Activated T-helper 1 cell treated with anti-CD3 and anti-CD28 coated beads, Interleukin-12 subunit alpha, Interleukin-12 subunit beta, Interleukin-2, Interleukin-4 antibody, amounts not matched to agents 30 ng/mL and 10 ng/mL and 1 ng/mL, durations not matched to agents 14 hours and 24 hours and 36 hours (primary cell): ENCODE measurements at regions of chr2 and their contacts with region 1.

Region 1: DNA sequence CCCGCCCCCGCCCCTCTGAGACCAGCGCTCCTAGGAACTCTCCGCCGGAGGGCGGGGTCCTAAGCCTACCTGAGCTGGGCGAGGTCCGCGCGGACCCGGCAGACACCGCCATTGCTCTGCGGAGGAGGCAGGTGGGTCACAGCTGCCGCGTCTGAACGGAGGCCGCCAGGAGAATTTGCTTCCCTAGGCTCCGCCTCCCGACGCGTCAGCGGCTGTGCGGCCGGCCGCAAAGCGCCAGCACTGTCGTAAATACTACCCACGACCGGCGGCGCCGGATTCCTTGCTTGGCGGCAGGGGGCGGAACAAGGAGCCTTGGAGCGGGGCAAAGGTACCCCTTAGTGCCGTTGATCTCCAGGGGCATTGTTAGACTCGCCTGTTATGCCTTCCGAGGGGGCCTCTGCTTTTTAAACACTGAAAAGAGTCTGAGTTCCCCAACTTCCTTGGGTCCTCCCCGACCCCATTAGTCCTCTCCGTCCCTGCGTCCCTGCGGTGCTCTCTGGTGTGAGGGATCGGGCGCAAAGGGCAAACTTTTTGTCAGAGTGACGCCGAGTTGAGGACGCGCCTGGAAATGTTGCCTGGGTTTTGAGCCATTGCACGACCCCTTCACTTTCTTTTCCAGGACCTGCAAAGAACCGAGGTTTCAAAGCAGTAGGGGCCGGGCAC is at the start of gene GGCX:
- DNase-seq: peak; percentile 88
- H3K4me3 Mint-ChIP-seq: peak within 1 kb of the TSS; percentile 94
- H3K27ac Mint-ChIP-seq: peak within 1 kb of the TSS; percentile 81
- H3K4me1 Mint-ChIP-seq: peaks cover 36% of the 10 kb centered on the region
- H3K27me3 Mint-ChIP-seq: no peaks in the 10 kb centered on the region
- total RNA-seq, gene GGCX: 26.2 and 28.3 TPM in 2 replicates

Region 2: GRCh38 chr2:85577386-85578242 is 16.2 kb after region 1 on chr2 and contains the start of gene VAMP8:
- intact Hi-C with region 1: loop called (anchors 1 kb)
- DNase-seq: peak; percentile 52
- H3K4me3 Mint-ChIP-seq: peak within 1 kb of the TSS; percentile 91
- H3K27ac Mint-ChIP-seq: peak within 1 kb of the TSS; percentile 86
- H3K4me1 Mint-ChIP-seq: peaks cover 35% of the 10 kb centered on the region
- H3K27me3 Mint-ChIP-seq: peaks cover 3% of the 10 kb centered on the region
- total RNA-seq, gene VAMP8: 86.1 and 89.6 TPM in 2 replicates

Region 3: GRCh38 chr2:85602476-85603234 is 41.2 kb after region 1 on chr2 and contains the start of gene TMEM150A:
- intact Hi-C with region 1: loop called (anchors 1 kb)
- DNase-seq: peak; percentile 80
- H3K4me3 Mint-ChIP-seq: peak within 1 kb of the TSS; percentile 87
- H3K27ac Mint-ChIP-seq: peak within 1 kb of the TSS; percentile 35
- H3K4me1 Mint-ChIP-seq: peaks cover 11% of the 10 kb centered on the region
- H3K27me3 Mint-ChIP-seq: no peaks in the 10 kb centered on the region
- total RNA-seq, gene TMEM150A: 7.0 and 8.9 TPM in 2 replicates

Region 4: GRCh38 chr2:85611705-85612587 is 50.5 kb after region 1 on chr2 and contains the start of gene C2orf68:
- intact Hi-C with region 1: loop called (anchors 2 kb)
- DNase-seq: peak; percentile 86
- H3K4me3 Mint-ChIP-seq: peak within 1 kb of the TSS; percentile 98
- H3K27ac Mint-ChIP-seq: peak within 1 kb of the TSS; percentile 89
- H3K4me1 Mint-ChIP-seq: peaks cover 12% of the 10 kb centered on the region
- H3K27me3 Mint-ChIP-seq: no peaks in the 10 kb centered on the region
- total RNA-seq, gene C2orf68: 36.3 and 36.7 TPM in 2 replicates